WTC11 (cell line): ENCODE measurements at regions of chr9 and their contacts with region 1.

Region 1: DNA sequence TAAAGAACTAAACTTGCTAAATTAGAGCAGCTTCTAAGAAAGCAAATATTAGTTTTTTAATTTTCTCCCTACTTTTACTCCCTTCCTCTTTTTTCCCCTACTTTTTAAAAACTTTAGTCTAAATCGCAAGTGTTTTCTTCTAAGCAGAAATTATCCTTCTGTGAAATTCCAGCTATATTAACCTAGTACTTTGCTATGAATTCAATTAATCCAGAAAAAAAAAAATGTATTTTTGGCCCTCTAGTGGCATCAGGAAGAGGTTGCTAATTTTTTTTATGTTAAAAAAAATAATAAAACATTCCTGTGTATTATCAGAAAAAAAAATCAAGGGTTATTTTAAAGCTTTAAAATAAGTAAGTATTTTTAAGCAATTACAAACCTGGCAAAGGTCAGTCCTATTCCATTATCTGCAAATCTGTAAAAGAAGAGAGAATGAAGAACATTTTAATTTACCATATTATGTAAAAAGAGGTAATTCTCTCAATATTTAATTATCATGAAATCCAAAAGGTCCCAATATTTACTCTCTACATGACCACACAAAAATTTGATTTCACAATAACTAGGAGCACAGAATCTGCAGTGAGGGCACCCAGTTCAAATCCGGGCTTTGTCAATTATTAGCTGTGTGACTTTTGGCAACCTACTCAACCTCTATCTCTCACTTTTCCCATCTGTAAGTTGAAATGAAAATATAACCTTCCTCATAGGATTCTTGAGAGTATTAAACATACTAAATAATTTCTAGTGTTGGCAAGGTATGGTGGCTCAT is 52.0 kb downstream of the CEMIP2 start:
- DNase-seq: no peak
- ATAC-seq: no peak
- H3K4me3 Mint-ChIP-seq: no peak overlapping the region
- H3K27ac Mint-ChIP-seq: no peak overlapping the region
- H3K4me1 Mint-ChIP-seq: no peaks in the 10 kb centered on the region
- H3K27me3 Mint-ChIP-seq: no peaks in the 10 kb centered on the region
- CTCF ChIP-seq: no peak

Region 2: DNA sequence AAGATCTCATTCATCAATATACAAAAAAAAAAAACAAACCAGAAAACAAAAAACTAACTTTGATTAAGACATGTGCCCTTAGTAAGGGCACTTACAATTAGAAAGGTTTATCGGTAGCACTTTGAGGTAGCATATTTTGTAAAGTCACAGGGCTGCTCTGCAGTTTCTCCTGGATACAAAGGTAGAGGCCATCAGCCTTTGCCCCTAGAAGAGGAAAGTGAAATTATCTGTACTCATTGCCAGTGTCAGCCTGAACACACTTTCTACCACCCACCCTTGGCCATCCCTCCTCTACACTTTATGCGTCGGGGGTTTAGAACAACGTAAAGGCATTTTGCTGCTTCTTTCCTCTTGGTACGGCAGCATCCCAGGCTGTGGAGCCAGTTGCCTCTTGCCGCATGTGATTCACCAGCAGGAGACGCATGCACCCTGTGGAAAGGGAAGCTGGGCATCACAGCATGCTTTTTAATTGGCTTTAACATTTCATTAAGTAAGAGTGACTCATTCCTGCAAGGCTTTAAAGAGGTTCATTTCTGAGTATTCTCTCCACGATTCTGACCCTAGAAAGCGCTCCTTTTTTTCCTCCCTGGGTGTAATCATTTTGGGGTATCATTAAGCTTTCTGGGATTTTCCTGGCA is 32.6 kb before region 1 on chr9:
- CTCF ChIA-PET with region 1: interaction called, 11 read pairs
- POLR2A ChIA-PET with region 1: no interaction called
- DNase-seq: peak; percentile 37
- ATAC-seq: peak; percentile 91
- H3K4me3 Mint-ChIP-seq: no peak overlapping the region
- H3K27ac Mint-ChIP-seq: peak overlapping the region; percentile 81; the same call in 1 of the 2 replicates
- H3K4me1 Mint-ChIP-seq: peaks cover 26% of the 10 kb centered on the region
- H3K27me3 Mint-ChIP-seq: no peaks in the 10 kb centered on the region
- CTCF ChIP-seq: no peak

Region 3: GRCh38 chr9:71726723-71727122 is 10.4 kb after region 1 on chr9:
- CTCF ChIA-PET with region 1: no interaction called
- POLR2A ChIA-PET with region 1: no interaction called
- DNase-seq: no peak
- ATAC-seq: no peak
- H3K4me3 Mint-ChIP-seq: no peak overlapping the region
- H3K27ac Mint-ChIP-seq: no peak overlapping the region; the same call in 1 of the 2 replicates
- H3K4me1 Mint-ChIP-seq: no peaks in the 10 kb centered on the region
- H3K27me3 Mint-ChIP-seq: no peaks in the 10 kb centered on the region
- CTCF ChIP-seq: no peak

Region 4: GRCh38 chr9:71962328-71962727 is 246.0 kb after region 1 on chr9:
- CTCF ChIA-PET with region 1: no interaction called
- POLR2A ChIA-PET with region 1: no interaction called
- DNase-seq: no peak
- ATAC-seq: no peak
- H3K4me3 Mint-ChIP-seq: no peak overlapping the region
- H3K27ac Mint-ChIP-seq: peak overlapping the region; percentile 71
- H3K4me1 Mint-ChIP-seq: peaks cover 51% of the 10 kb centered on the region
- H3K27me3 Mint-ChIP-seq: no peaks in the 10 kb centered on the region
- CTCF ChIP-seq: no peak